Thyroid gland (tissue), 4 donors: ENCODE measurements at regions of chr11 and their contacts with region 1.

Region 1: DNA sequence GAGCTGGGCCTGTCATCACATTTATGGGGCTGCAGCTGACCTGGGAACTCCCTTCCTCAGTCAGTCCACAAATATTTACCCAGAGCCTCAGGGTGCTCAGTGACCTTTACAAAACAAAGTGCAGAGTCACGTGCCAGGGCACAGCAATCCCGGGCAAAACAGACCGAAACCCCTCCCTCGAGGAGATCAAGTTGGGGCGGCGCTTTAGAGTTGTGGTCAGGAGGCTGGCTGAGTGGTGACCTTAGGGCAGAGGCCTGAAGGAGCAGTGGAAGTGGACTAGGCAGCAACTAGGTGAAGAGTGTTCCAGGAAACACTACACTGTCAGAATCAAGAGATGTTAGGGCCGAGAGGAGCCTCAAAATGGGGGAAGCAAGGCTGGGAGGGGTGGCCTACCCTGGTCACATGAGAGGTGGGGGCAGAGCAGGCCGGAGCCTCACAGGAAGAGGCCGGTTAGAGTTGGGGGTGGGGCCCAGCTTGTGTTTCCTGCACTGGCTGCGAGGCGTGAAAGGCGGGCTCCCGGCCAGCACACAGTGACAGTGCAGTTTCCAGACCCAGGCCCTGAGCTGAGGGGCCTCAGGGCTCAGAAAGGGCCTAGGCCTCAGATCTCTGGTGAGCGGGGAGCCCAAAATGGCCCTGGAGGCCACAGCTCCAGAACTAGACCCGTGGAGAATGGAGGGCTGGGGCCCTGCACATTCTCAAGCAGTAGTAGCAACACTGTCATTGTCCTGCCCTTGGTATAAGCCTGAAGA is 3.7 kb upstream of the NEAT1 start:
- DNase-seq: peak; percentile 99 to 100
- H3K4me3 ChIP-seq: peak overlapping the region in 1 of 3 donors; percentile 38
- H3K27ac ChIP-seq: peak overlapping the region; percentile 98 to 100 (median 100)
- H3K4me1 ChIP-seq: peaks cover 53 to 56% of the 10 kb centered on the region in 2 donors
- H3K27me3 ChIP-seq: no peaks in the 10 kb centered on the region
- CTCF ChIP-seq: no peak
- POLR2A ChIP-seq: peak; percentile 46 to 72

Region 2: GRCh38 chr11:65354265-65355012 is 64.4 kb before region 1 on chr11 and contains the start of gene TIGD3:
- intact Hi-C with region 1: no loop called
- DNase-seq: peak; percentile 98 to 99
- H3K4me3 ChIP-seq: peak within 1 kb of the TSS; percentile 12 to 82 (median 28)
- H3K27ac ChIP-seq: no peak within 1 kb of the TSS
- H3K4me1 ChIP-seq: peaks cover 12 to 19% of the 10 kb centered on the region in 2 donors
- H3K27me3 ChIP-seq: no peaks in the 10 kb centered on the region
- CTCF ChIP-seq: no peak
- POLR2A ChIP-seq: peak in 1 of 2 donors; percentile 66
- total RNA-seq, gene TIGD3: 0.34 TPM in 1 of 4 donors, not detected in the others

Region 3: DNA sequence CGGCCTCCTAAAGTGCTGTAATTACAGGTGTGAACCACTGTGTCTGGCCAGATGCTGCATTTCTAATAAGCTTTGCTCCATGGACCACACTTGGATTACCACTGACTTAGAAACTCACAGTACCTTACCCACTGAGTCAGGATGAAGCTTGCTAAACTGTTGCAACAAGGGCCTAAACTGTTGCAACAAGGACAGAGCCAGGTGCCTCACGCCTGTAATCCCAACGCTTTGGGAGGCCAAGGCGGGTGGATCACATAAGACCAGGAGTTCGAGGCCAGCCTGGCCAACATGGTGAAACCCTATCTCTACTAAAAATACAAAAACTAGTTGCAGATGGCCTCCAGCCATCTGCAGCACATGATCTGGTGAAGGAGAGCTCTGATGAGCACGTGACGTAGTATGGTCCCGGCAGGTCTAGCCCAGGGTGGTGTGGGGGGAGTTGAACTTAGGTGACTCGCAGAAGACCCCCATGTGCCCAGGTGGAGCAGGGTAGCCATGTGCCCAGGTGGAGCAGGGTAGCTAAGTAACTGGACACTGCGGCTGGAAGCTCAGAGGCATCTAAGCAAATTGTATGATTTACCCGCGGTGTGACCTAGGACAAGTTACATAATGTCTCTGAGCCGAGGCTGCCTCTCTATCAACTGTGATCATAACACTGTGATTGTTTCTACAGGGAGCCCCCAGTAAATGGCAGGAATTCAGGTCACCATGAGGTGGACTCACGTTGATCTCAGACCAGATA is 44.9 kb before region 1 on chr11:
- intact Hi-C with region 1: loop called (anchors 5 kb)
- DNase-seq: no peak
- H3K4me3 ChIP-seq: no peak overlapping the region
- H3K27ac ChIP-seq: no peak overlapping the region
- H3K4me1 ChIP-seq: peaks cover 0 to 5% of the 10 kb centered on the region in 2 donors
- H3K27me3 ChIP-seq: no peaks in the 10 kb centered on the region
- CTCF ChIP-seq: no peak
- POLR2A ChIP-seq: no peak

Region 4: DNA sequence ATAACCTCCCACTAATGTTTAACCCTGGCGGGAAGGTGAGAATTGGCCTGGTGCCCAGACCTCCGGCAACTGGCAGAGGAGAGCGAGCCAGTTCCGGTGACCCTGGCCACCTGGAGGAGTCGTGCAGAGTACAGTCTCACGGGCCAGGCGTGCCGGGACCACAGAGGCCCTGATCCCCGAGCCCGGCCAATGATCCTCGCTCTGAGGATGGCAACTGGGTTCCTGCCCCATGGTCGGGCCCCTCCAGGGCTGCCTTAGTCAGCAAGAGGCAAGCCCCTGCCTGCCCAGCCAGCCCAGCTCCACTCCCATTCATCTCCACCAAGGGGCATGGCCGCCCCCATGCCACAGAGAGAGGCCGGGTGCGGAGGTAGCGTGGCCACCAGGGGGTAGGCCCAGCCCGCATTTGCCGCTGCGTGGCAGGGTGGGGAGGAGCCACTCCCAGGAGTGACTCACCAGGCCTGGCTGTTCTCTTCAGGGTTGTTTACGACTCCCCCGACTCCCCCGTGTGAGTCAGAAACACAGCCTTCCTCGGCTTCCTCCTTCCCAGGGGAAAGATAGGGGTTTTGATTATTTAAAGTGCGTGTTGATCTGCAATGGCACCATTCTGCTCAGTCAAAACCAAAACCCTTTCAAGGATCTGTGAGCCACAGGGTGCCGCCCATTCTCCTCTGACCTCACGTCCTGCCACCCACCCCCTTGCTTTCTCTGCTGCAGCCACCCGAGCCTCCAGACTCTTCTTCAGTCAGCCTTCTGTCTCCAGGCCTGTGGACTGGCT is 36.7 kb before region 1 on chr11 and contains the start of gene SLC25A45:
- intact Hi-C with region 1: loop called (anchors 5 kb)
- DNase-seq: peak; percentile 88 to 90
- H3K4me3 ChIP-seq: peak within 1 kb of the TSS in 1 of 3 donors; percentile 25
- H3K27ac ChIP-seq: peak within 1 kb of the TSS; percentile 82 to 98 (median 93)
- H3K4me1 ChIP-seq: peaks cover 23 to 58% of the 10 kb centered on the region in 2 donors
- H3K27me3 ChIP-seq: no peaks in the 10 kb centered on the region
- CTCF ChIP-seq: peak; percentile 72 to 89 (median 78)
- POLR2A ChIP-seq: peak in 1 of 2 donors; percentile 84
- total RNA-seq, gene SLC25A45: 13.0 to 28.0 (median 20.9) TPM